Activated B cell treated with CpG ODN at 0.5 μM for 24 hours (primary cell): ENCODE measurements at regions of chr2 and their contacts with region 1.

Region 1: DNA sequence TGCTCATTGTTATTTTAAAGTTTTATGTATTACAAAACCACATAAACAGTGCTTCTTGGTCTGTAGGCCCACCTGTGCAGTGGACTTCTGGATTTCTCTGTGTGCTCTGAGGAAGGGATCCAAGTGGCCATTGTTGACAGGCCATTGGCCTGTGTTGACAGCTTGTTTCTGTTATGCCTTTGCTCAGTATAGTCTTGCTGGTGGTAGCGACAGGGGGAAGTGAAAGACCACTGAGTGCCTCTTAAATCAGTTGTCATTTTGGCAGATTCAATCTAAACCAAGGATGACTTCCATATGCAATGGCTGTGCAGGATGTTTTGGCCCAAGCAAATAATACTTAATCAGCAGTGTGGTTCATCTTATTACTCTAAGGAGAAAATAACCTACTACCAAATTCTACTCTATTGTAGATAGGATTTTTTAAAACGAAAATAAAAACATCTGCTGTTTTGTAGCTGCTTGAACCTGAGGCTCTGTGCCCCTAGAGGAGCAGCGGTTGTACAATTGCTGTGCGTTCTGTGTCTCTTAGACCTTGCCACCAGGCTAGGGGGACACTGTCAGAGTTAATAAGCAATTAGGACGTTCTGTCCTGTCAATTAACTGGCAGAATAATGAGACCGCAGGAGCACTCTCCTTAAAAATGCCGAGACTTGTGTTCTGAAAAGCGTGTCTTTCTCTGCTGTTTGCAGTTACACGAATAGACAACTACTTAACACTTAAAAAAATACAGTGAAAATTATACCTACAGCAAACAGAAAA is 108.2 kb downstream of the RHBDD1 start:
- DNase-seq: no peak
- ATAC-seq: peak; percentile 47
- H3K4me3 Mint-ChIP-seq: no peak overlapping the region
- H3K27ac Mint-ChIP-seq: peak overlapping the region; percentile 70
- H3K4me1 Mint-ChIP-seq: peaks cover 19% of the 10 kb centered on the region
- H3K27me3 Mint-ChIP-seq: no peaks in the 10 kb centered on the region
- CTCF ChIP-seq: no peak

Region 2: GRCh38 chr2:226818930-226819329 is 125.1 kb before region 1 on chr2:
- CTCF ChIA-PET with region 1: no interaction called
- POLR2A ChIA-PET with region 1: interaction called, 11 read pairs
- intact Hi-C with region 1: no loop called
- DNase-seq: no peak
- ATAC-seq: no peak
- H3K4me3 Mint-ChIP-seq: no peak overlapping the region
- H3K27ac Mint-ChIP-seq: no peak overlapping the region
- H3K4me1 Mint-ChIP-seq: no peaks in the 10 kb centered on the region
- H3K27me3 Mint-ChIP-seq: peaks cover 2% of the 10 kb centered on the region
- CTCF ChIP-seq: no peak

Region 3: DNA sequence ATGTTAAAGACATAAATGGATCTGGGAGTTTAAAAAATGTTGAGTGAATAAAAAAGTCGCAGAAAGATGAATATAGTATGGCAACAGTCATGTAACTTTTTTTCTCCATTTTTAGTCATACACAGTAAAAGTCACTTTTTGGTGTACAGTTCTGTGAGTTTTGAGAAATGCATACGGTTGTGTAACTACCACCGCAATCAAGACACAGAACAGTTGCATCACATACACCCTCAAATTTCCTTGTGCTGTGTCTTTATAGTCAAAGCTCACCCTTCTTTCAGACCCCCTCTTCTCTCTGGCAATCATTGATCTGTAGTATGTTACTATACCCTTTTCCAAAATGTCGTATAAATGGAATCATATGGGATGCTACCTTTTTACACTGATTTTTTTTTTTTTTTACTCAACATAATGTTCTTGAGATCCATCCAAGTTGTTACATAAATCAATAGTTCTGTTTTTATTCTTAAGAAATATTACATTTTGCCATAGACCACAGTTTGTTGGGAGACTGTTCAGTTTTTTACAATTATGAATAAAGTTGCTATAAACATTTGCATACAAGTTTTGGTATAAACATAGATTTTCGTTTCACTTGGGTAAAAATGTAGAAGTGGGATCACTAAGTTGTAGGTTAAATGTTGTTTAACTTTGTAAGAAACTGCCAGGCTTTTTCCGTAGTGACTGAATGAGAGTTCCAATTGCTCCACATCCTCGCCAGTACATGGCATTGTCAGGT is 492.6 kb after region 1 on chr2:
- CTCF ChIA-PET with region 1: no interaction called
- POLR2A ChIA-PET with region 1: no interaction called
- intact Hi-C with region 1: no loop called
- DNase-seq: no peak
- ATAC-seq: no peak
- H3K4me3 Mint-ChIP-seq: no peak overlapping the region
- H3K27ac Mint-ChIP-seq: no peak overlapping the region
- H3K4me1 Mint-ChIP-seq: no peaks in the 10 kb centered on the region
- H3K27me3 Mint-ChIP-seq: no peaks in the 10 kb centered on the region
- CTCF ChIP-seq: no peak